Transverse colon (tissue), 4 donors: ENCODE measurements at regions of chr11 and their contacts with region 1.

Region 1: DNA sequence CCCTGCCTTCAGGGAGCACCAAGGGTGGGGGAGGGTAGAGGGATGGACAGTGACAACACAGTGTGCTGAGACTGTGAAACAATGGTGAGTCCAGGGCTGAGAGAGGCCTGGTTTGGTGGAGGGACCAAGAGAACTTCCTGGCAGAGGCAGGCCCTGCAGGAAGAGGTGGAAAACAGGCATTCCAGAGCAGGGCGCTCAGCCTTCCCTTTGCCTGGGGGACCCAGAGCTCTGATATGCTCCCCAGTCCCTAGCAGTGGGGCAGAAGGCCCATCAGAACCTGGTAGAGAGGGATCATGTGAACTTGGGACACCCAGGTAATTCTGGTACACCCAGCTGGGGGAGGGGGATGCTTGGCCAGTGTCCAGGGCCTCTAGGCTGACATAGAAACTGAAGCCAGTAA is 17.2 kb upstream of the UVRAG start:
- DNase-seq: no peak
- H3K4me3 ChIP-seq: no peak overlapping the region
- H3K27ac ChIP-seq: no peak overlapping the region
- H3K4me1 ChIP-seq: no peaks in the 10 kb centered on the region
- H3K27me3 ChIP-seq: no peaks in the 10 kb centered on the region
- CTCF ChIP-seq: no peak
- EP300 ChIP-seq: no peak
- POLR2A ChIP-seq: no peak

Region 2: DNA sequence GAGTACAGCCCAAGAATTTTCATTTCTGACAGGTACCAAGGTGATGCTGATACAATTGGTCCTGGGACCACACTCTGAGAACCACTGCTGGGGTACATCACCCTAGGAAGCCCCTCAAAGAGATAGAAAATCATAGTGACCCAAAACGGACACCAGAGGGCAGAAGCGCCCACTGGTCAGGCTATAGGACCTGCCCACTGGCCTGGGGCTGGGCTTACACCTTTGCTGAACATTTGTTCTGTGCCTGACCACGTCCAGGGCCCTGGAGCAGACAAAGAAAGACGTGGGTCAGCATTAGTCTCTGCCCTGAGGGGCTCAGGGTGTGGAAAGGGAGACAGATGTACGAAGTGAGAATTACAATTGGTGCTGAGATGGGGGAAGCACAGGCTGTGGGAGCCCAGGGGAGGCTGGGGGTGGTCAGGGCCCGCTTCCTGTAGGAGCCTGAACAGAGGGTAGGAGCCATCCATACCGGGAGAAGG is 250.2 kb before region 1 on chr11:
- in situ Hi-C with region 1: no loop called
- intact Hi-C with region 1: no loop called
- DNase-seq: peak; percentile 72
- H3K4me3 ChIP-seq: no peak overlapping the region
- H3K27ac ChIP-seq: peak overlapping the region in 1 of 4 donors; percentile 14
- H3K4me1 ChIP-seq: peaks cover 0 to 3% (median 1%) of the 10 kb centered on the region in 4 donors
- H3K27me3 ChIP-seq: no peaks in the 10 kb centered on the region
- CTCF ChIP-seq: peak; percentile 77 to 90 (median 84)
- EP300 ChIP-seq: no peak
- POLR2A ChIP-seq: no peak

Region 3: DNA sequence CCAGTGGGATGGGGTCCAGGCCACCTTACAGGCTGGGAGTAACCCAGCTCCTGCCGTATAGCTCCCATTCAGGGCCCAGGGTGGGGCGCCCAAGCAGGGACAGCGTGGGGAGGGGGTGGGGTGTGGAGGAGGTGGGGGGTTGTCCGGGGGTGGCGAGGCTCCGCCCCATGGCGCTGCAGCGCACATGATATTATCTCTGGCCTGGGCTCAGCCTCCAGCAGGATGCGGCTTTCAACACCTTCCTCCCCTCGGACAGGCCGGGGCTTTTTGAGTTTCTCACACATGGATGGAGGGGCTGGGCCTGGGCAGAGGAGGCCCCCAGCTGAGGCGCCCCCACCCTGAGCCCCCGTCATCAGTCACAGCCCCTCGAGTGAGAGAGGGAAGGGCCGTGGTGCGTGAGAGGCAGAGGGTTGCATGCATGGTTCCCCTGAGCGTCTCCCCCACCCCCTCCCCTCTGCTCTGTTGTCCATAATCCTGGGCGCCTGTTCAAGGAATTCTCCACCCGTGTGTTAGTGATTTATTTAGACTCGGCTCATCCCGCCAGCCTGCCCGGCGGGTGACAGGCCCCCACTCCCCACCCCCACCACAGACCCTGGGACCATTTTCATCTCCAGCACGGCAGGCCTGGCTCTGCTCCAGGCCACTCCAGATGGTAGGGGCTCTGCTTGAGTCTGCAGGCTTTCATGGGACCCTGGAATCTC is 363.6 kb after region 1 on chr11:
- in situ Hi-C with region 1: no loop called
- intact Hi-C with region 1: loop called (anchors 5 kb)
- DNase-seq: no peak
- H3K4me3 ChIP-seq: peak overlapping the region in 1 of 4 donors; percentile 7
- H3K27ac ChIP-seq: no peak overlapping the region
- H3K4me1 ChIP-seq: peaks cover 0 to 5% (median 0%) of the 10 kb centered on the region in 4 donors
- H3K27me3 ChIP-seq: no peaks in the 10 kb centered on the region
- CTCF ChIP-seq: no peak
- EP300 ChIP-seq: no peak
- POLR2A ChIP-seq: no peak